Right ventricle myocardium inferior (tissue), 1 donor: ENCODE measurements at regions of chr3 and their contacts with region 1.

Region 1: GRCh38 chr3:16511681-16512434 is 1.6 kb downstream of the RFTN1 start:
- DNase-seq: peak; percentile 81
- ATAC-seq: peak; percentile 55

Region 2: GRCh38 chr3:16290007-16290826 is 221.6 kb before region 1 on chr3:
- intact Hi-C with region 1: loop called (anchors 1 kb)
- DNase-seq: no peak
- ATAC-seq: no peak

Region 3: GRCh38 chr3:16357186-16358147 is 154.4 kb before region 1 on chr3:
- intact Hi-C with region 1: loop called (anchors 5 kb)
- DNase-seq: peak; percentile 15
- ATAC-seq: no peak

Region 4: GRCh38 chr3:16427103-16427965 is 84.5 kb before region 1 on chr3:
- intact Hi-C with region 1: loop called (anchors 5 kb)
- DNase-seq: no peak
- ATAC-seq: peak; percentile 95